Right cardiac atrium (tissue), 5 donors: ENCODE measurements at regions of chr19 and their contacts with region 1.

Region 1: DNA sequence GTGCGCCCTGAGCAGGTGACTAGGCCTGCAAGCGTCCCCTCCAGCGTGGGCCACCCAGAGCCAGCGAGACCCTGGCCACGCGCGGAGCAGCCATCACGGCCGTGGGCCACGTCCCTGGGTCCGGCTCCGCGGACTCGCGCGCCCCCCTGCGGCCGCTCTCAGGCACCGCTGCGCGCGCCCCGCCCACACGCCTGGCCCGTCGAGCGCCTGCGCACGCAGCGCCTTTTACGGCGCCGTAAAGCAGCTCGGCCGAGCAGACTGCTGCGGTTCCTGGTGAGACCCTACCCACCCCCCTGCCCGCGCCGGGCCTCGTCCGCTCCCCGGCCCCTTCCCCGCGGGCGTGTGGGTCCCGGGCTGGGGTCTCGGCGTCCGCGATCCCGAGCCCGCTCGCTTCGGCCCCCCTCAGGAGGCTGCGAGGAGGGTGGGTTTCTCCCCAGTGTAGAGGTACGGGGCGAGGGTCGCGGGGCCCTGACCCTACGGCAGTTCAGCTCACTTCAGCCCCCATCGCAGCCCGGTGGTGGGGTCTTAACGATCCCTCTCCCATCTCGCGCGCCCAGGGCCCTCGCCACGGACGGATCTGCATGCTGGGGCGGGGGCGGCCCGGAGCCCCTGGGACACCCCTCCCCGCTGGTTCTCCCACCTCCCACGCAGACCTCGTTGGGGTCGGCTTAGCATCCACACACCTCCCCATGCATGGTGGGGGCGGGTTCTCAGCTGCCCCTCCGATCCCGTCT is at the start of gene TRAPPC5:
- DNase-seq: peak; percentile 88 to 97 (median 96)
- ATAC-seq: peak; percentile 90
- H3K4me3 ChIP-seq: peak within 1 kb of the TSS; percentile 92
- H3K27ac ChIP-seq: peak within 1 kb of the TSS; percentile 13
- H3K4me1 ChIP-seq: no peaks in the 10 kb centered on the region
- H3K27me3 ChIP-seq: no peaks in the 10 kb centered on the region
- total RNA-seq, gene TRAPPC5: 94.8 to 121 (median 97.1) TPM

Region 2: GRCh38 chr19:7349961-7350711 is 330.6 kb before region 1 on chr19:
- intact Hi-C with region 1: loop called in 1 of 4 experiments (anchors 10 kb)
- DNase-seq: no peak
- ATAC-seq: peak in 1 of 2 donors; percentile 32
- H3K4me3 ChIP-seq: no peak overlapping the region
- H3K27ac ChIP-seq: no peak overlapping the region
- H3K4me1 ChIP-seq: no peaks in the 10 kb centered on the region
- H3K27me3 ChIP-seq: no peaks in the 10 kb centered on the region

Region 3: DNA sequence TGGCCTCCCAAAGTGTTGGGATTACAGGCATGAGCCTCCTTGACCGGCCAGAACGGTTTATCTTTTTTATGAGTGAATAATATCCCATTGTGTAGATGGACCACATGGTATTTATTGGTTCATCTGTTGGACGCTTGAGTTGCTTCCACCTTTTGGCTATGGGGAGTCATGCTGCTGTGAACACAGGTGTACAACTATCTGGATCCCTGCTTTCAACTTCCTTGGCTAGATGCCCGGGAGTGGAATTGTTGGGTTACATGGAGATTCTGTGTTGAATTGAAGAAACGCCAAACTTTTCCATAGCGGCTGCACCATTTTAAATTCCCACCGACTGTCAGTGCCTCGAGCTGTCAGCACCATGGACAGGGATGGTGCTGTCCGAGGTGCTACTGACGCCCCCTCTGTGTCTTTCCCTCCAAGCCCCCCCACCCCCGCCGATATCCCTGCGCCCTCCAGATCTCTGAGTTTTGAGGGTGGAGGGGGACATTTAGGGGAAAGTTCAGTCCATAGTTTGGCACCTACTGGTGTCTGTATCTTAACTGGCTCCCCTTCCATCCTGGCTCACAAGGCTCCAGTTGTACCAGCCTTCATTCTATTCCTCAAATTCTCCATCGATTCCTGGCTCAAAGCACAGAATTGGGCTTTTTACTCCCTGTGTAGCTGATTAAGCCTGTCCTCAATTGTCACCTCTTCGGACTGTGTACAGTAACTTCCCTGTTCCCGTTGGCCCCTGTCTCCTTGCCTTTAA is 118.0 kb before region 1 on chr19:
- intact Hi-C with region 1: loop called in 2 of 4 experiments (anchors 5 to 10 kb)
- DNase-seq: no peak
- ATAC-seq: no peak
- H3K4me3 ChIP-seq: no peak overlapping the region
- H3K27ac ChIP-seq: no peak overlapping the region
- H3K4me1 ChIP-seq: no peaks in the 10 kb centered on the region
- H3K27me3 ChIP-seq: no peaks in the 10 kb centered on the region

Region 4: GRCh38 chr19:7605490-7606222 is 75.1 kb before region 1 on chr19:
- intact Hi-C with region 1: no loop called
- DNase-seq: peak in 1 of 3 donors; percentile 26
- ATAC-seq: no peak
- H3K4me3 ChIP-seq: no peak overlapping the region
- H3K27ac ChIP-seq: no peak overlapping the region
- H3K4me1 ChIP-seq: no peaks in the 10 kb centered on the region
- H3K27me3 ChIP-seq: no peaks in the 10 kb centered on the region

Region 5: GRCh38 chr19:7629347-7630054 is 51.3 kb before region 1 on chr19 and contains the starts of genes PET100 and XAB2:
- intact Hi-C with region 1: no loop called
- DNase-seq: peak; percentile 95 to 98 (median 97)
- ATAC-seq: peak; percentile 98
- H3K4me3 ChIP-seq: peak within 1 kb of the TSS; percentile 94
- H3K27ac ChIP-seq: peak within 1 kb of the TSS; percentile 71
- H3K4me1 ChIP-seq: peaks cover 2% of the 10 kb centered on the region
- H3K27me3 ChIP-seq: no peaks in the 10 kb centered on the region
- total RNA-seq, gene PET100: 136 to 194 (median 167) TPM
- total RNA-seq, gene XAB2: 18.9 to 27.3 (median 26.0) TPM

Region 6: GRCh38 chr19:7652061-7652641 is 28.6 kb before region 1 on chr19:
- intact Hi-C with region 1: loop called in 1 of 4 experiments (anchors 2 kb)
- DNase-seq: peak; percentile 68 to 92 (median 88)
- ATAC-seq: peak; percentile 65 to 80
- H3K4me3 ChIP-seq: peak overlapping the region; percentile 9
- H3K27ac ChIP-seq: no peak overlapping the region
- H3K4me1 ChIP-seq: no peaks in the 10 kb centered on the region
- H3K27me3 ChIP-seq: no peaks in the 10 kb centered on the region